ENCODE measurements at regions of chr15 and their contacts with region 1.

Region 1: GRCh38 chr15:80059786-80060355 is 395 bp downstream of the ZFAND6 start:
- DNase-seq: peak in 3 of 6 donors; percentile 50 to 91 (median 55)
- ATAC-seq: peak; percentile 73 to 87 (median 82)
- H3K4me3 ChIP-seq: peak overlapping the region; percentile 79 to 92 (median 80)
- H3K27ac ChIP-seq: peak overlapping the region; percentile 86 to 98 (median 94)
- H3K4me1 ChIP-seq: peaks cover 6 to 15% (median 11%) of the 10 kb centered on the region in 3 donors
- H3K27me3 ChIP-seq: no peaks in the 10 kb centered on the region
- CTCF ChIP-seq: no peak

Region 2: GRCh38 chr15:80152180-80152845 is 92.4 kb after region 1 on chr15:
- intact Hi-C with region 1: loop called in 1 of 3 experiments (anchors 10 kb)
- DNase-seq: peak; percentile 93 to 99 (median 99)
- ATAC-seq: peak; percentile 90 to 93 (median 91)
- H3K4me3 ChIP-seq: peak overlapping the region; percentile 42 to 58 (median 48)
- H3K27ac ChIP-seq: peak overlapping the region; percentile 53 to 74 (median 62)
- H3K4me1 ChIP-seq: no peaks in the 10 kb centered on the region
- H3K27me3 ChIP-seq: no peaks in the 10 kb centered on the region
- CTCF ChIP-seq: no peak

Measured in pancreas (tissue), 10 donors.